CD8-positive, alpha-beta memory T cell (primary cell): ENCODE measurements at regions of chr3 and their contacts with region 1.

Region 1: DNA sequence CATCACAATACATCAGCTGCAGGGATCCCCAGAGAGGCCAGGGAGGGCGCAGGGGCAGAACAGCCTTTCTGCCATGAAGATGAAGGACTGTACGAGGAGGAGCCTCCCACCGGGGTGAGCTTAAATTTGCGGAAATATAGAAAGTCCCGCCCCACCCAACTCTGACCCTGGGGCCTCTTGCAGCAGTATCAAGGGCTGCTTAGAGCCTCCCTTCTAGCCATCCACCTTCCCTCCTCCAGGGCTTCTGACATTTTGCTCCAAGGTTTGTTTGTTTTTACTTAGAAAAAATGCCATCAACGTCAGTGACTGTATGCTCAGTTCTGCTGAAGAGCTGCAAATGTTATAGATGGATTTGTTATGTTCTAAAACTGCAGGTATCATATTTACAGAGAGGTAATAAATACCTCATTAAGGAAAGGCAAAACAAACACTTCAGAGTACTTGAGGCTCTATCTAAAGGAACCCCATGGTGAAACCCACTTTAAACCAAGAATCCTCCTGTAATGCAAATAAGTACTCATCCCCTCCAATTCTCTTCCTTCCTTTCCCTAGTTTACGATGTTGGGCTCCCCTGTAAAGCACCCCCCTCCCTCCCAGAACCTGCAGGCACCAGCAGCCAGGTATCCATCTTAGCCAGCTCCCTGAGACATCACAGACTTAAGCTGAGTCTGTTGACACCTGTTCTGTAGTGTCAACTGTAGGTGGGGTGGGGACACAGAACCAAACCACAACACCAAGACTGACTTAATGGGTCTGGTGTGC is 30.5 kb downstream of the RFTN1 start:
- DNase-seq: peak; percentile 6 to 52 (median 26)
- H3K4me3 ChIP-seq: peak overlapping the region; percentile 35
- H3K4me3 Mint-ChIP-seq: peak overlapping the region; percentile 43 to 85 (median 68)
- H3K27ac ChIP-seq: no peak overlapping the region
- H3K27ac Mint-ChIP-seq: peak overlapping the region; percentile 62 to 96 (median 90)
- H3K4me1 ChIP-seq: peaks cover 42% of the 10 kb centered on the region
- H3K4me1 Mint-ChIP-seq: peaks cover 69 to 93% (median 89%) of the 10 kb centered on the region in 3 donors
- H3K27me3 ChIP-seq: no peaks in the 10 kb centered on the region
- H3K27me3 Mint-ChIP-seq: peaks cover 0 to 3% of the 10 kb centered on the region in 2 donors

Region 2: GRCh38 chr3:16496408-16497222 is 13.7 kb after region 1 on chr3:
- CTCF ChIA-PET with region 1: interaction called, 15 read pairs
- POLR2A ChIA-PET with region 1: interaction called, 10 read pairs
- DNase-seq: no peak
- H3K4me3 ChIP-seq: no peak overlapping the region
- H3K4me3 Mint-ChIP-seq: peak overlapping the region in 6 of 7 donors; percentile 6 to 68 (median 50)
- H3K27ac ChIP-seq: no peak overlapping the region
- H3K27ac Mint-ChIP-seq: peak overlapping the region; percentile 17 to 96 (median 62)
- H3K4me1 ChIP-seq: peaks cover 47% of the 10 kb centered on the region
- H3K4me1 Mint-ChIP-seq: peaks cover 62 to 83% (median 77%) of the 10 kb centered on the region in 3 donors
- H3K27me3 ChIP-seq: no peaks in the 10 kb centered on the region
- H3K27me3 Mint-ChIP-seq: no peaks in the 10 kb centered on the region

Region 3: DNA sequence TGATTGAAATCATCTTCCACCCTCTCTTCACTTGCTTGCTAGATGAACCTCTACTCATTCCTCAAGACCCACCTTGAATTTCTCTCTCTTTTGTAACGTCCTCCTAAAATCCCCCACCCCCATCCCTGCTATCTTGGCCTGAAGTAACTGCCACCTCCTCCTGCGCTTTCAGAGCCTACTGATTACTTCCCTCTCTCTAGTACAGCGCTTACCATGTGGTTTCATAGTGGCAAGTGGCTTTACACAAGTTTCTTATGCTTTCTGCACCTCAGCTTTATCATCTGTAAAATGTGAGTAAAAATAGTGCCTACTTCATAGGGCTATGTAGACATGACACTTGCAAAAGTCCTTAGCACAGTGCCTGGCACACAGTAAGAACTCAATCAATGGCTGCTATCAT is 151.0 kb after region 1 on chr3:
- CTCF ChIA-PET with region 1: no interaction called
- POLR2A ChIA-PET with region 1: no interaction called
- DNase-seq: no peak
- H3K4me3 ChIP-seq: no peak overlapping the region
- H3K4me3 Mint-ChIP-seq: no peak overlapping the region
- H3K27ac ChIP-seq: no peak overlapping the region
- H3K27ac Mint-ChIP-seq: no peak overlapping the region
- H3K4me1 ChIP-seq: no peaks in the 10 kb centered on the region
- H3K4me1 Mint-ChIP-seq: no peaks in the 10 kb centered on the region
- H3K27me3 ChIP-seq: no peaks in the 10 kb centered on the region
- H3K27me3 Mint-ChIP-seq: peaks cover 0 to 6% of the 10 kb centered on the region in 2 donors